ENCODE measurements at regions of chr15 and their contacts with region 1.

Region 1: DNA sequence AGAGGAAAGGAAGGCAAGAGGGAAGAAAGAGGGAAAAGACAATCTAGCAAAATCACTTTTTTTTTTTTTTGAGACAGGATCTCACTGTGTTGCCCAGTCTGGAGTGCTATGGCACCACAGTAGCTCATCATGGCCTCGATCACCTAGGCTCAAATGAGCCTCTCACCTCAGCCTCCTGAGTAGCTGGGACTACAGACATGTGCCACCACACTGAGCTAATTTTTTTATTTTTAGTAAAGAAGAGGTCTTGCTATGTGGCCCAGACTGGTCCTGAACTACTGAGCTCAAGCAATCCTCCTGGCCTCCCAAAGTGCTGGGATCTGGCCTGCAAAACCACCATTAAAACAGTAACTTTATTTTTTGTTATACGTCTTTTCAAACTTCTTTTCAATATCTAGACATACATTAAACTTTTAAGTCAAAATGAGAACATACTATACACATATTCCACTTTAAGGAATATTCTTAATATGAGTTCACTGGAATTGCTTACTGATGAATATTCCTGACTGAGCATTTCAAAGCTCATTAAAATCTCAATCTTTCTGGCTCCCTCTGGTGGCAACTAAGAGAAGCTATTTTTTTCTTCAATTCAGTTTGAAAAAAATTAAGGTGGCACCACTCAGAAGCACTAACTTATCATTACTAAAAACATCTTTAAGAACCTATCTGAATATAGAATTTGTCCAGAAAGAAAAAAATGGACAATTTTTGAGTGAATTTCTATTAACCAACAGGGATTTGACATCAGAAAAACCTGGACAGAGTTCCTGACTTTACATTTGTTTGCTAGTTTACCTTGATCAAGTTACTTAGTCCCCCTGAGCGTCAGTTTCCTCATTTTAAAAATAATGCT is 40.9 kb downstream of the UACA start:
- DNase-seq: no peak
- ATAC-seq: peak; percentile 44

Region 2: GRCh38 chr15:69394556-69395282 is 1327.8 kb before region 1 on chr15:
- intact Hi-C with region 1: no loop called
- DNase-seq: peak; percentile 48 to 87
- ATAC-seq: peak; percentile 84

Region 3: GRCh38 chr15:70670680-70671079 is 51.8 kb before region 1 on chr15:
- intact Hi-C with region 1: loop called in 1 of 2 experiments (anchors 10 kb)
- DNase-seq: no peak
- ATAC-seq: no peak

Region 4: DNA sequence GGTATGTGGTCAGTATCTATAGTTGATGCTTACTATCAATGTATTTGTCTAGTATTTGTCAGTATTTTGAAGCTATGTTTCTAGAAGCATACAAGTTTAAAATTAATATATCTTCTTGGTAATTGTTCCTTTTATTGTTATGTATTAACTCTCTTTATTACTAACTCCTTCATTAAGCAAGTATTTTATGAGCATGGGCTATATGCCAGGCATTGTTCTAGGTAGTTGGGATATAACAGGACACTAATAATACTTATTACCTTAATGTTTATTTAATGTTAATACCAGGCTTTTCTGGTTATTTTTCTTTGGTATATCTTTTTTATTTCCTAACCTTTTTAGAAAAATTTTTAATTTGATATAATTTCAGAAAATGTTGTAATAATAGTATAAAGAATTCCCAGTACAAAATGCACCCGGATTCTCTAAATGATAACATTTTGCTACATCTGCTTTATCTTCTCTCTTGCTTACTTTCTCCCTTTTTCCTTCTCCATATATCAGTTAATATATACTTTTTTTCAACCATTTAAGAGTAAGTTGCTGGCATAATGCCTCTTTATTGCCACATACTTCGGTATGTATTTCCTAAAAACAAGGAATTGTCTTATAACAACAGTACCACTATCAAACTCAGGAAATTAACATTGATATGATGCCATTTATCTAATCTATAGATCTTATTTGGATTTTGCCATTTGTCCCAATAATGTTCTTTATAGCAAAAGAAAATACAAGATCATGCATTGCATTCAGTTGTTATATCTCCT is 201.0 kb after region 1 on chr15:
- intact Hi-C with region 1: no loop called
- DNase-seq: no peak
- ATAC-seq: no peak